Naive thymus-derived CD8-positive, alpha-beta T cell (primary cell): ENCODE measurements at regions of chr1 and their contacts with region 1.

Region 1: GRCh38 chr1:227776331-227776771 is 39.1 kb upstream of the PRSS38 start:
- DNase-seq: no peak
- ATAC-seq: no peak
- H3K4me3 Mint-ChIP-seq: peak overlapping the region in 1 of 10 donors; percentile 22
- H3K27ac Mint-ChIP-seq: peak overlapping the region in 5 of 10 donors; percentile 46 to 66 (median 52)
- H3K4me1 Mint-ChIP-seq: peaks cover 18 to 39% (median 33%) of the 10 kb centered on the region in 4 donors
- H3K27me3 Mint-ChIP-seq: no peaks in the 10 kb centered on the region

Region 2: DNA sequence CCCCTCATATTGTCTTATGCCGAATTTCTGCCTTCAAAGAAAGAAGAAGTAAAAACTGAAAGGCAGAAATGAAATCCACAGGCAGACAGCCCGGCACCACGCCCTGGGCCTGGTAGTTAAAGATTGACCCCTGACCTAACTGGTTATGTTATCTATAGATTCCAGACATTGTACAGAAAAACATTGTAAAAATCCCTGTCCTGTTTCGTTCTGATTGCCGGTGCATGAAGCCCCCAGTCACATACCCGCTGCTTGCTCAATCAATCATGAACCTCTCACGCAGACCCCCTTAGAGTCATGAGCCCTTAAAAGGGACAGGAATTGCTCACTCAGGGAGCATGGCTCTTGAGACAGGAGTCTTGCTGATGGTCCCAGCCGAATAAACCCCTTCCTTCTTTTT is 90.5 kb before region 1 on chr1:
- POLR2A ChIA-PET with region 1: no interaction called
- DNase-seq: no peak
- ATAC-seq: no peak
- H3K4me3 Mint-ChIP-seq: no peak overlapping the region
- H3K27ac Mint-ChIP-seq: peak overlapping the region in 1 of 10 donors; percentile 60
- H3K4me1 Mint-ChIP-seq: no peaks in the 10 kb centered on the region
- H3K27me3 Mint-ChIP-seq: no peaks in the 10 kb centered on the region

Region 3: DNA sequence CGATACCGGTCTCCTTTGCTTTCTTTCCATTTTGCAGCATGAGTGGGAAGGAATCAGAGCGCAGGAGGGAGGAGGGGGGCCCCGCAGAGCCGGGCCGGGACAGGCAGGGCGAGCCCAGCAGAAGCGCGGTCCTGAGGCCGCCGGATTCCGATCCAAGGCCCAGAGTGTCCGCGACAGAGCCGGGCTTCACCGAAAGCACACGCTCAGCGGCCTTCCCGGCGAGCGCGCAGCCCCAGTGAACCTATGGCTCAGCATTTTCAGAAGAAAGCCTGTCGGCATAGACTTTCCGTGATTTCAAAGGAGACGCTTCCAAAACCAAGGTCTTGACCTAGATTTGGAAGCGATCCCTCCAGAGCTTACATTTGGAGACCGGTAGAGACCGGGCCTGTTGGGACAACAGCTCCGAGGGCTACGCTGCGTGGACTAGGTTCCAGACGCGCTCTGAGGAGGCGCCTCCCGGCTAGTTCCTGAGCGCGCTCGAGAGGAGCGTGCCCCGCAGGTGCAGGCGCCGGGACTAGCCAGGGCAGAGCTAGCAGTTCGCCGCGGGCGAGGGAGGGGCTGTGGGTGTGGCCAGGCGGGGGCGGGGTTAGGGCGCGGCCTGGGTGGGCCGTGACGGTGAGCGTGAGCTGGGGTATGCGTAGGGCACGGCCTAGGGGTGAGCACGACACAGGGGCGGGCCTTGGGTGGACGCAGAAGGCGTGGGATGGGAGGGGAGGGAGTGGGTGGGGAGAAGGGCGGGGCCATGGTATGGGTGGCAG is 11.3 kb after region 1 on chr1:
- POLR2A ChIA-PET with region 1: interaction called, 26 read pairs
- DNase-seq: peak; percentile 86 to 98 (median 93)
- ATAC-seq: peak; percentile 84 to 93
- H3K4me3 Mint-ChIP-seq: peak overlapping the region; percentile 81 to 94 (median 86)
- H3K27ac Mint-ChIP-seq: peak overlapping the region in 8 of 10 donors; percentile 60 to 93 (median 82)
- H3K4me1 Mint-ChIP-seq: peaks cover 16 to 31% (median 28%) of the 10 kb centered on the region in 4 donors
- H3K27me3 Mint-ChIP-seq: no peaks in the 10 kb centered on the region